ENCODE measurements at regions of chr4 and their contacts with region 1.

Region 1: GRCh38 chr4:42656944-42657792 is at the start of gene ATP8A1:
- DNase-seq: peak; percentile 80 to 97 (median 92)
- ATAC-seq: peak; percentile 88 to 95 (median 89)
- H3K4me3 ChIP-seq: peak within 1 kb of the TSS; percentile 95 to 96
- H3K4me3 Mint-ChIP-seq: peak within 1 kb of the TSS; percentile 97 to 98 (median 98)
- H3K27ac ChIP-seq: peak within 1 kb of the TSS; percentile 89
- H3K27ac Mint-ChIP-seq: peak within 1 kb of the TSS; percentile 96 to 99
- H3K4me1 ChIP-seq: peaks cover 23% of the 10 kb centered on the region in 2 experiments
- H3K4me1 Mint-ChIP-seq: peaks cover 38 to 51% (median 50%) of the 10 kb centered on the region in 3 donors
- H3K27me3 ChIP-seq: no peaks in the 10 kb centered on the region
- H3K27me3 Mint-ChIP-seq: no peaks in the 10 kb centered on the region
- total RNA-seq, gene ATP8A1: 33.7 to 73.2 (median 47.8) TPM

Region 2: GRCh38 chr4:42531341-42532030 is 125.7 kb before region 1 on chr4:
- CTCF ChIA-PET with region 1: no interaction called
- POLR2A ChIA-PET with region 1: no interaction called
- DNase-seq: no peak
- ATAC-seq: no peak
- H3K4me3 ChIP-seq: no peak overlapping the region
- H3K4me3 Mint-ChIP-seq: no peak overlapping the region
- H3K27ac ChIP-seq: no peak overlapping the region
- H3K27ac Mint-ChIP-seq: no peak overlapping the region
- H3K4me1 ChIP-seq: no peaks in the 10 kb centered on the region
- H3K4me1 Mint-ChIP-seq: peaks cover 0 to 7% (median 6%) of the 10 kb centered on the region in 3 donors
- H3K27me3 ChIP-seq: no peaks in the 10 kb centered on the region
- H3K27me3 Mint-ChIP-seq: no peaks in the 10 kb centered on the region

Region 3: GRCh38 chr4:42646013-42646784 is 11.0 kb before region 1 on chr4:
- CTCF ChIA-PET with region 1: interaction called in 1 of 2 experiments, 21 read pairs
- POLR2A ChIA-PET with region 1: interaction called, 4 to 11 read pairs
- DNase-seq: no peak
- ATAC-seq: no peak
- H3K4me3 ChIP-seq: no peak overlapping the region
- H3K4me3 Mint-ChIP-seq: peak overlapping the region in 1 of 3 donors; percentile 1
- H3K27ac ChIP-seq: peak overlapping the region; percentile 48
- H3K27ac Mint-ChIP-seq: peak overlapping the region in 1 of 2 donors; percentile 23
- H3K4me1 ChIP-seq: peaks cover 6 to 31% of the 10 kb centered on the region in 2 experiments
- H3K4me1 Mint-ChIP-seq: peaks cover 80 to 88% (median 81%) of the 10 kb centered on the region in 3 donors
- H3K27me3 ChIP-seq: no peaks in the 10 kb centered on the region
- H3K27me3 Mint-ChIP-seq: no peaks in the 10 kb centered on the region

Region 4: GRCh38 chr4:42673082-42673425 is 15.9 kb after region 1 on chr4:
- CTCF ChIA-PET with region 1: interaction called in 1 of 2 experiments, 5 read pairs
- POLR2A ChIA-PET with region 1: interaction called in 1 of 2 experiments, 12 read pairs
- DNase-seq: peak in 9 of 35 experiments; percentile 3 to 40 (median 11)
- ATAC-seq: peak in 3 of 4 experiments; percentile 30 to 43 (median 31)
- H3K4me3 ChIP-seq: no peak overlapping the region
- H3K4me3 Mint-ChIP-seq: peak overlapping the region in 1 of 3 donors; percentile 51
- H3K27ac ChIP-seq: peak overlapping the region; percentile 68
- H3K27ac Mint-ChIP-seq: peak overlapping the region; percentile 80 to 94
- H3K4me1 ChIP-seq: peaks cover 29 to 34% of the 10 kb centered on the region in 2 experiments
- H3K4me1 Mint-ChIP-seq: peaks cover 43 to 46% (median 43%) of the 10 kb centered on the region in 3 donors
- H3K27me3 ChIP-seq: no peaks in the 10 kb centered on the region
- H3K27me3 Mint-ChIP-seq: no peaks in the 10 kb centered on the region

Region 5: DNA sequence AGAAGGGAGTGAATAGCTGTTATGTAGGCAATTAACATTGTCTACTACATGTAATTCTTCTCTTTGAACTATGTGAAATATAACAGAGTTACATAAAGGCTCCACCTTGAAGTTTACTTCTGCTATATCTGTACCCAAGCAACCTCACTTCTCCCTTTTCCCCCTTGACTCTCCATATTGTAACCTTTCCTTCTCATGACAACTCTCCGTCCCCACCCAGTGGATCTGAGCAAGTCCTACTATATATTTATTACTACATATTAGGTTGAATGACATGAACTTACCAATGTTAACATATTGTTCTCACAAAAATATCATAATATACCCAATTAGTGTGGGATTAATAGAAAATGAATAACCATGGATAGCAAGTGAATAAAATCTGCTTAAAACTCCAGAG is 92.9 kb after region 1 on chr4:
- CTCF ChIA-PET with region 1: no interaction called
- POLR2A ChIA-PET with region 1: interaction called in 1 of 2 experiments, 12 read pairs
- DNase-seq: peak in 29 of 35 experiments; percentile 11 to 71 (median 27)
- ATAC-seq: peak in 3 of 4 experiments; percentile 64 to 84 (median 64)
- H3K4me3 ChIP-seq: no peak overlapping the region
- H3K4me3 Mint-ChIP-seq: no peak overlapping the region
- H3K27ac ChIP-seq: no peak overlapping the region
- H3K27ac Mint-ChIP-seq: no peak overlapping the region
- H3K4me1 ChIP-seq: no peaks in the 10 kb centered on the region
- H3K4me1 Mint-ChIP-seq: no peaks in the 10 kb centered on the region
- H3K27me3 ChIP-seq: no peaks in the 10 kb centered on the region
- H3K27me3 Mint-ChIP-seq: no peaks in the 10 kb centered on the region